Naive thymus-derived CD4-positive, alpha-beta T cell (primary cell): ENCODE measurements at regions of chr2 and their contacts with region 1.

Region 1: GRCh38 chr2:237421542-237422116 is 7.7 kb upstream of the COL6A3 start:
- DNase-seq: peak; percentile 57 to 81 (median 71)
- ATAC-seq: peak; percentile 91
- H3K4me3 ChIP-seq: peak overlapping the region; percentile 34
- H3K4me3 Mint-ChIP-seq: peak overlapping the region; percentile 51 to 77 (median 67)
- H3K27ac ChIP-seq: no peak overlapping the region
- H3K27ac Mint-ChIP-seq: peak overlapping the region in 7 of 9 donors; percentile 36 to 81 (median 70)
- H3K4me1 ChIP-seq: peaks cover 9% of the 10 kb centered on the region in 2 donors
- H3K4me1 Mint-ChIP-seq: peaks cover 11 to 58% (median 50%) of the 10 kb centered on the region in 7 donors
- H3K27me3 ChIP-seq: no peaks in the 10 kb centered on the region
- H3K27me3 Mint-ChIP-seq: peaks cover 0 to 11% (median 0%) of the 10 kb centered on the region in 5 donors

Region 2: DNA sequence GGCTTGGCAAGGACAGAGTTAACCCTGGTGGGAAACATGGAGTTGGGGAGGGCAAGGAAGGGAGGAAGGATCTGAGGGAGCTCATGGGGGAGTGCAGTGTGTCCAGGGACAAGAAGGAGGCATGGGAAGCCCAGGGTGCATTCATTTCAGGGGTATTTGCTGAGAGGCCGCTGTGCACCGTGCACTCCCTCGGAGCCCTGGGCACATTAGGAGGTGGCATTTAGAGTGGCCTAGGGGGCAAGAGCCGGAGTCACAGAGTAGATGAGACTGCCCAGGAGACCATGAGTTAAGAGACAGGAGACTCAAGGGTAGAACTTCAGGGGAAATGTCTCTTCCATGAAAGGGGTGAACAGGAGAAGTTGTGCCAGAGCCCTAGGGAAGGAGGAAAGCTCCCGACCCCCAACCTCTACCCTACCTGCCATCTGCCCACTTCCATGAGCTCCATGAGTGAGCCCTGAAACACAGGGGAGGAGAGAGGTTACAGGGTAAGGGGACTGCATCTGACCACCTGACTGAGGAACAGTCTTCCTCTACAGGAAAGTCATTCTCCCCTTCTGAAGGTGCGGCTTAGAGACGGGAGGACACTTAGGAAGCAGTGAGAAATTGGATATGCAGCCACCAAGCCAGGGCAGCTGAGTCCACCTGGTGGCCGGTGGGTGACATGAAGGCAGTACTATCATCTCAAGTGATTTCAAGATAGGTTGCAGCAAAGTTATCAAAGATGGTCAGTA is 394.5 kb before region 1 on chr2:
- CTCF ChIA-PET with region 1: no interaction called
- POLR2A ChIA-PET with region 1: no interaction called
- intact Hi-C with region 1: no loop called
- DNase-seq: peak in 8 of 9 donors; percentile 7 to 53 (median 28)
- ATAC-seq: peak; percentile 64
- H3K4me3 ChIP-seq: no peak overlapping the region
- H3K4me3 Mint-ChIP-seq: no peak overlapping the region
- H3K27ac ChIP-seq: no peak overlapping the region
- H3K27ac Mint-ChIP-seq: no peak overlapping the region
- H3K4me1 ChIP-seq: no peaks in the 10 kb centered on the region
- H3K4me1 Mint-ChIP-seq: no peaks in the 10 kb centered on the region
- H3K27me3 ChIP-seq: no peaks in the 10 kb centered on the region
- H3K27me3 Mint-ChIP-seq: peaks cover 0 to 7% (median 0%) of the 10 kb centered on the region in 5 donors

Region 3: GRCh38 chr2:237039301-237040031 is 382.2 kb before region 1 on chr2:
- CTCF ChIA-PET with region 1: no interaction called
- POLR2A ChIA-PET with region 1: no interaction called
- intact Hi-C with region 1: no loop called
- DNase-seq: no peak
- ATAC-seq: no peak
- H3K4me3 ChIP-seq: no peak overlapping the region
- H3K4me3 Mint-ChIP-seq: no peak overlapping the region
- H3K27ac ChIP-seq: no peak overlapping the region
- H3K27ac Mint-ChIP-seq: no peak overlapping the region
- H3K4me1 ChIP-seq: no peaks in the 10 kb centered on the region
- H3K4me1 Mint-ChIP-seq: no peaks in the 10 kb centered on the region
- H3K27me3 ChIP-seq: no peaks in the 10 kb centered on the region
- H3K27me3 Mint-ChIP-seq: peaks cover 0 to 15% (median 5%) of the 10 kb centered on the region in 5 donors

Region 4: DNA sequence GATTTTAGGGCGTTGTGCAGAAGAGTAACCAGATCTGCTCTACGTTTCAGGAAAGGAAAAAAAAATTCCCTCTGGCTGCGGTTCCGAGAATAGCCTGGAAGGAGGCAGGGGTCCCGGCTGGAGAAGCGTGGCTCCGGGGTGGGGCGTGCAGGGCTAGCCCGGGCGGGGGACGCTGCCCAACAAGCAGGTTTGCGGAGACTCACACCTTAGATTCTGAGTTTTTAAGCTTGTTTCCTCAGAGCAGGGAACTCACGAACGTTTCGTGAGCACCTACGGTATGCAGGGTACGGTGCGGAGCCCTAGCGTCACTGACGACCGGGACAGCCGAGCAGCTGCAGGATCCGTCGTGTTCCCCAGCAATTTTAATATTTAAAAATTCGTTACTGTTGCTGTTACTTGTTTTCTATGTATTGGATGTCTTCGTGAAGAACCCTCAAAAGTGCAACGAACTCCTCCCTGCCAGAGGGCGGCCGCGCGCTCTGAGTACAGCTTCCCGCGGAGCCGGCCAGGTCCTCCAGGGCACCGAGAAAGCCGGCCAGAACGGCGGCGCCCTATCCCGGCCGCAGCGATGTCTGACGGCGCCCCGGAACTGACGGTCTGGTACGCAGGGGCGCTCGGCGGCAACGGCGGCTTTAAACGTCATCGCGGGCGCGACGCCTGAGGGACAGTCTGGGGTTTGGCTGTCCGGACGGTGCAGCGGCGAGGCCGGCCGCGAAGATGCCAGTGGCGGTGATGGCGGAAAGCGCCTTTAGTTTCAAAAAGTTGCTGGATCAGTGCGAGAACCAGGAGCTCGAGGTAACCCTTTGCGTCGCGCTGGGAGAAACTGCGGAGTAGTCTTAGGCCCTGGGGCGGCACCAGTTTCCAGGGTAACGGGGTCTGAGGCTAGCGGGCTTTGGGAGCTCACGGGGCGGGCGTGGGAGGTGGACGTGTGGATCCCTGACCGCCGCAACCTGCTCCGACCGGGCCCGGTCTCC is 336.1 kb before region 1 on chr2 and contains the start of gene COPS8:
- CTCF ChIA-PET with region 1: no interaction called
- POLR2A ChIA-PET with region 1: no interaction called
- intact Hi-C with region 1: loop called in 1 of 2 experiments (anchors 1 kb)
- DNase-seq: peak; percentile 82 to 93 (median 89)
- ATAC-seq: peak; percentile 99
- H3K4me3 ChIP-seq: peak within 1 kb of the TSS; percentile 95
- H3K4me3 Mint-ChIP-seq: peak within 1 kb of the TSS; percentile 95 to 100 (median 99)
- H3K27ac ChIP-seq: peak within 1 kb of the TSS; percentile 83
- H3K27ac Mint-ChIP-seq: peak within 1 kb of the TSS; percentile 94 to 99 (median 99)
- H3K4me1 ChIP-seq: peaks cover 8 to 15% of the 10 kb centered on the region in 2 donors
- H3K4me1 Mint-ChIP-seq: peaks cover 23 to 52% (median 28%) of the 10 kb centered on the region in 7 donors
- H3K27me3 ChIP-seq: no peaks in the 10 kb centered on the region
- H3K27me3 Mint-ChIP-seq: no peaks in the 10 kb centered on the region
- total RNA-seq, gene COPS8: 31.2 to 46.4 (median 40.8) TPM

Region 5: DNA sequence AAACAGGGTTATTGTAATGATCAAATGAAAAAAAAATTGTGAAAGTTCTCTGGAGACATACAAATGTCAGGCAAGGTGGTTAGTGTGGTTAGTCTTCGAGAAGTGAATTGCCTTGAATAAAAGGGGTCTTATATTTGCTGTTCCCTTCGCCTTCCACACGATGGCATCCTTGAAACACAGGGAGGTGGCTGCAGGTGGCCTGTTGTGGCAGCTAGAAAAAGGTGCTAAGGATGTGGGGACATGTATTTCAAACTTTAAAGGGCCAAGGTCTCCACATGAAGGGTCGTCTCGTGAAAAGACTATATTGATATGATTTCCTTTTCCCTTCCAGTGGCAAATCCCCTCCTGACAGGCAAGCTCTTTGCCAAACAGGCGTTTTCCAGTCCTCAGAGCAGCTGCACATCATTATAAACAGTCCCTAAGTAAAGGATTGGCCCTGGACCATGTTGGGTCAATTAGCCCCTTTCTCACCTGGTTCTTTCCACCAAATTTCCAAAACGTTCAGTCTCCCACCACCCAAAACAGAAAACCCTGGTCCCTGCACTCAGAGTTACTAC is 267.5 kb before region 1 on chr2:
- CTCF ChIA-PET with region 1: interaction called, 15 read pairs
- POLR2A ChIA-PET with region 1: no interaction called
- intact Hi-C with region 1: loop called (anchors 1 kb)
- DNase-seq: peak; percentile 21 to 74 (median 60)
- ATAC-seq: peak; percentile 72
- H3K4me3 ChIP-seq: no peak overlapping the region
- H3K4me3 Mint-ChIP-seq: no peak overlapping the region
- H3K27ac ChIP-seq: no peak overlapping the region
- H3K27ac Mint-ChIP-seq: no peak overlapping the region
- H3K4me1 ChIP-seq: no peaks in the 10 kb centered on the region
- H3K4me1 Mint-ChIP-seq: peaks cover 0 to 23% (median 8%) of the 10 kb centered on the region in 7 donors
- H3K27me3 ChIP-seq: no peaks in the 10 kb centered on the region
- H3K27me3 Mint-ChIP-seq: no peaks in the 10 kb centered on the region

Region 6: DNA sequence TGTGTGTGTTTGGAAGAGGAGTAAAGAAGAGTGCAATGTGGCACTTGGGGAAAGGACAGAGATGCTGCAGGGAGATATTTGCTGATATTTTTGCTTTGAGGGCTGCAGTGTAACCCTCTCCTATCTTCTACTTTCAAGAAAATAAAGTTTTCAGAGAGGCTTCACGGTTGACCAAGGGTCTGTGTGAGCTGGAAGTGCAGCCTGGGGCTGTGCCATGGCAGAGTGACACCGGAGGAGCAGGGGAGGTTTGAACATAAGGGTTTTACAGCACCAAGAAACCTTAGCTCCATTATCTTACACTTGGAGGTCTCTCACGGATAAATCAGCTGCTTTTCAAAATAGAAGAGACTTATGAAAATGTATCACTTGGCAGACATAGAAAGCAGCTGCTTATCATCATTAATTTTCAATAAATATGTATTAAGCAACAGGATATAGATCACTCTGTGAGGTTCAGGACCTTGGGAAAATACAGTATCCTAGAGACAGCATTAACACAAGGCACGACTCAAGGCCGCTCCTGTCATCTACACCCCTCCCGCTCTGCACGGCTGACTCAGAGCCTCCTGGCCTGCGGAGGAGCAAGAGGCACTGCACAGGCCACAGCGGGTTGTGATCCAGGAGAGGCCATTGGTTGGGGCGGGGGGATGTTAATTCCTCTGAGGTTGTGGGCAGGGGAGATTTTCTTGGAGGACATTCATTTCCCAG is 208.2 kb before region 1 on chr2:
- CTCF ChIA-PET with region 1: no interaction called
- POLR2A ChIA-PET with region 1: no interaction called
- intact Hi-C with region 1: no loop called
- DNase-seq: no peak
- ATAC-seq: no peak
- H3K4me3 ChIP-seq: no peak overlapping the region
- H3K4me3 Mint-ChIP-seq: no peak overlapping the region
- H3K27ac ChIP-seq: no peak overlapping the region
- H3K27ac Mint-ChIP-seq: no peak overlapping the region
- H3K4me1 ChIP-seq: no peaks in the 10 kb centered on the region
- H3K4me1 Mint-ChIP-seq: no peaks in the 10 kb centered on the region
- H3K27me3 ChIP-seq: no peaks in the 10 kb centered on the region
- H3K27me3 Mint-ChIP-seq: peaks cover 0 to 6% (median 4%) of the 10 kb centered on the region in 5 donors

Region 7: GRCh38 chr2:237434866-237435311 is 13.3 kb after region 1 on chr2:
- CTCF ChIA-PET with region 1: interaction called, 40 read pairs
- POLR2A ChIA-PET with region 1: interaction called, 34 read pairs
- intact Hi-C with region 1: loop called in 1 of 2 experiments (anchors 1 kb)
- DNase-seq: peak; percentile 29 to 85 (median 71)
- ATAC-seq: peak; percentile 83
- H3K4me3 ChIP-seq: peak overlapping the region; percentile 44
- H3K4me3 Mint-ChIP-seq: peak overlapping the region; percentile 60 to 89 (median 81)
- H3K27ac ChIP-seq: peak overlapping the region; percentile 64
- H3K27ac Mint-ChIP-seq: peak overlapping the region; percentile 84 to 100 (median 95)
- H3K4me1 ChIP-seq: peaks cover 35 to 84% of the 10 kb centered on the region in 2 donors
- H3K4me1 Mint-ChIP-seq: peaks cover 53 to 94% (median 91%) of the 10 kb centered on the region in 7 donors
- H3K27me3 ChIP-seq: no peaks in the 10 kb centered on the region
- H3K27me3 Mint-ChIP-seq: no peaks in the 10 kb centered on the region

Region 8: GRCh38 chr2:237441605-237442274 is 20.1 kb after region 1 on chr2:
- CTCF ChIA-PET with region 1: interaction called, 40 read pairs
- POLR2A ChIA-PET with region 1: interaction called, 34 read pairs
- intact Hi-C with region 1: no loop called
- DNase-seq: peak in 8 of 9 donors; percentile 46 to 70 (median 61)
- ATAC-seq: peak; percentile 88
- H3K4me3 ChIP-seq: no peak overlapping the region
- H3K4me3 Mint-ChIP-seq: peak overlapping the region; percentile 40 to 71 (median 56)
- H3K27ac ChIP-seq: peak overlapping the region; percentile 40
- H3K27ac Mint-ChIP-seq: peak overlapping the region; percentile 51 to 87 (median 79)
- H3K4me1 ChIP-seq: peaks cover 10 to 48% of the 10 kb centered on the region in 2 donors
- H3K4me1 Mint-ChIP-seq: peaks cover 36 to 79% (median 71%) of the 10 kb centered on the region in 7 donors
- H3K27me3 ChIP-seq: no peaks in the 10 kb centered on the region
- H3K27me3 Mint-ChIP-seq: no peaks in the 10 kb centered on the region

Region 9: GRCh38 chr2:237603718-237604362 is 182.2 kb after region 1 on chr2:
- CTCF ChIA-PET with region 1: interaction called, 3 read pairs
- POLR2A ChIA-PET with region 1: no interaction called
- intact Hi-C with region 1: loop called in 1 of 2 experiments (anchors 10 kb)
- DNase-seq: peak; percentile 39 to 91 (median 84)
- ATAC-seq: peak; percentile 98
- H3K4me3 ChIP-seq: peak overlapping the region; percentile 38
- H3K4me3 Mint-ChIP-seq: peak overlapping the region; percentile 64 to 85 (median 73)
- H3K27ac ChIP-seq: peak overlapping the region; percentile 88
- H3K27ac Mint-ChIP-seq: peak overlapping the region; percentile 93 to 99 (median 97)
- H3K4me1 ChIP-seq: peaks cover 8 to 23% of the 10 kb centered on the region in 2 donors
- H3K4me1 Mint-ChIP-seq: peaks cover 18 to 42% (median 37%) of the 10 kb centered on the region in 7 donors
- H3K27me3 ChIP-seq: no peaks in the 10 kb centered on the region
- H3K27me3 Mint-ChIP-seq: peaks cover 0 to 11% (median 0%) of the 10 kb centered on the region in 5 donors

Region 10: GRCh38 chr2:239087046-239087710 is 1665.5 kb after region 1 on chr2:
- CTCF ChIA-PET with region 1: no interaction called
- POLR2A ChIA-PET with region 1: no interaction called
- intact Hi-C with region 1: no loop called
- DNase-seq: no peak
- ATAC-seq: no peak
- H3K4me3 ChIP-seq: no peak overlapping the region
- H3K4me3 Mint-ChIP-seq: no peak overlapping the region
- H3K27ac ChIP-seq: no peak overlapping the region
- H3K27ac Mint-ChIP-seq: peak overlapping the region in 2 of 9 donors; percentile 5 to 22
- H3K4me1 ChIP-seq: no peaks in the 10 kb centered on the region
- H3K4me1 Mint-ChIP-seq: peaks cover 0 to 8% (median 0%) of the 10 kb centered on the region in 7 donors
- H3K27me3 ChIP-seq: no peaks in the 10 kb centered on the region
- H3K27me3 Mint-ChIP-seq: no peaks in the 10 kb centered on the region